ENCODE measurements at regions of chr1 and their contacts with region 1.

Region 1: GRCh38 chr1:235206533-235207208 is 45.6 kb upstream of the RBM34 start:
- DNase-seq: peak in 1 of 9 donors; percentile 47
- ATAC-seq: peak; percentile 79
- H3K4me3 ChIP-seq: no peak overlapping the region
- H3K4me3 Mint-ChIP-seq: peak overlapping the region; percentile 8 to 77 (median 60)
- H3K27ac ChIP-seq: peak overlapping the region; percentile 36
- H3K27ac Mint-ChIP-seq: peak overlapping the region; percentile 58 to 89 (median 85)
- H3K4me1 ChIP-seq: peaks cover 0 to 18% of the 10 kb centered on the region in 2 donors
- H3K4me1 Mint-ChIP-seq: peaks cover 18 to 42% (median 32%) of the 10 kb centered on the region in 7 donors
- H3K27me3 ChIP-seq: no peaks in the 10 kb centered on the region
- H3K27me3 Mint-ChIP-seq: no peaks in the 10 kb centered on the region

Region 2: GRCh38 chr1:235100194-235100772 is 106.4 kb before region 1 on chr1:
- CTCF ChIA-PET with region 1: no interaction called
- POLR2A ChIA-PET with region 1: no interaction called
- intact Hi-C with region 1: loop called in 1 of 2 experiments (anchors 5 kb)
- DNase-seq: peak in 1 of 9 donors; percentile 4
- ATAC-seq: no peak
- H3K4me3 ChIP-seq: no peak overlapping the region
- H3K4me3 Mint-ChIP-seq: no peak overlapping the region
- H3K27ac ChIP-seq: no peak overlapping the region
- H3K27ac Mint-ChIP-seq: no peak overlapping the region
- H3K4me1 ChIP-seq: peaks cover 16 to 21% of the 10 kb centered on the region in 2 donors
- H3K4me1 Mint-ChIP-seq: peaks cover 20 to 38% (median 33%) of the 10 kb centered on the region in 7 donors
- H3K27me3 ChIP-seq: no peaks in the 10 kb centered on the region
- H3K27me3 Mint-ChIP-seq: peaks cover 0 to 5% (median 0%) of the 10 kb centered on the region in 5 donors

Region 3: GRCh38 chr1:235190431-235190830 is 16.2 kb before region 1 on chr1:
- CTCF ChIA-PET with region 1: no interaction called
- POLR2A ChIA-PET with region 1: no interaction called
- intact Hi-C with region 1: loop called in 1 of 2 experiments (anchors 2 kb)
- DNase-seq: no peak
- ATAC-seq: no peak
- H3K4me3 ChIP-seq: no peak overlapping the region
- H3K4me3 Mint-ChIP-seq: no peak overlapping the region
- H3K27ac ChIP-seq: no peak overlapping the region
- H3K27ac Mint-ChIP-seq: peak overlapping the region in 5 of 9 donors; percentile 19 to 78 (median 36)
- H3K4me1 ChIP-seq: no peaks in the 10 kb centered on the region
- H3K4me1 Mint-ChIP-seq: peaks cover 4 to 24% (median 15%) of the 10 kb centered on the region in 7 donors
- H3K27me3 ChIP-seq: no peaks in the 10 kb centered on the region
- H3K27me3 Mint-ChIP-seq: no peaks in the 10 kb centered on the region

Region 4: GRCh38 chr1:235295902-235296376 is 89.3 kb after region 1 on chr1:
- CTCF ChIA-PET with region 1: no interaction called
- POLR2A ChIA-PET with region 1: no interaction called
- intact Hi-C with region 1: loop called in 1 of 2 experiments (anchors 5 kb)
- DNase-seq: no peak
- ATAC-seq: no peak
- H3K4me3 ChIP-seq: no peak overlapping the region
- H3K4me3 Mint-ChIP-seq: peak overlapping the region in 9 of 10 donors; percentile 4 to 81 (median 60)
- H3K27ac ChIP-seq: no peak overlapping the region
- H3K27ac Mint-ChIP-seq: peak overlapping the region; percentile 41 to 92 (median 79)
- H3K4me1 ChIP-seq: peaks cover 38 to 47% of the 10 kb centered on the region in 2 donors
- H3K4me1 Mint-ChIP-seq: peaks cover 33 to 77% (median 65%) of the 10 kb centered on the region in 7 donors
- H3K27me3 ChIP-seq: no peaks in the 10 kb centered on the region
- H3K27me3 Mint-ChIP-seq: no peaks in the 10 kb centered on the region